Prostate gland (tissue), 2 donors: ENCODE measurements at regions of chr5 and their contacts with region 1.

Region 1: DNA sequence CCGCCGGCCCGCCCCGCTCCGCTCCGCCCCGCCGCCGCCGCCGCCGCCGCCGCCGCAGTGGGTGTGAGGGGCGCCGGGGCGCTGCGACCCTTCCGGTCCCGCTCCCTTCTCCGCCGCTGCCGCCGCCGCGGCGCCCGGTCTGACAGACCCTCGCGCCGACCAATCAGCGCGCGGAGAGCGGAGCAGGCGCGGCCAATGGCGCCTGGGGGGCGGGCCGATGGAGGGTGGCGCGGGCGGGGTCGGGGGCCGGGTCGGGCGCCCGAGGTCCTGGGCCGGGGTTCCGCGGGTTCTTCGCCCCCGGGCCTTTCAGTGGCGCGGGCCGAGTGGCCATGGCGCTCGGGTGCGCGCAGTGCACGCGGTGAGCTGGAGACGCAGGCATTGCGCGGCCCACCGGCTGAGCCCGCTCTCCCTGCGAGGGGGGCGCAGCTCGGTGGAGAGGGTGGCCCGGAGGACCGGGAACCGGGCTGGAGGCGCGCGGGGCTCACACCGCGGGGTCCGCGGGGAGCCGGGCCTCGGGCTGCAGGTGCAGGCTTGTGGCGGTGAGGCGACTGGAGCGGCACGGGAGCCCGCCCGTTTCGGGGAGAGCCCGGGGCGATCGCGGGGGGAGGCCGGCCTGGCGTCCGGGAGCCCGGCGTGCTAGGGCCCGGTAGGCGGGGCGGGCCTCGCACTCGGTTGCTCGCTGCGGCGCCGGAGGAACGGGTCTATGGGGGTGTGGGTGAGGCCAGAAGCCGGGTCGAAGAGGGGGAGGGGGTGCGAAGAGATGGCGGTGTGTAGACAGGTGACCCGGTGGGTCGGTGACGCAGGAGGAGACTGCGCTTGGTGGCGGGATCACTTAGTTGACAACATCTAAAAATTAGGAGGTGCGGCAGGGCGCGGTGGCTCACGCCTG is at the start of gene MAPK9:
- DNase-seq: peak; percentile 74
- H3K4me3 ChIP-seq: peak within 1 kb of the TSS; percentile 89 to 98
- H3K27ac ChIP-seq: peak within 1 kb of the TSS; percentile 91 to 93
- H3K4me1 ChIP-seq: peaks cover 4% of the 10 kb centered on the region
- H3K27me3 ChIP-seq: no peaks in the 10 kb centered on the region
- CTCF ChIP-seq: peak in 1 of 4 experiments; percentile 16
- POLR2A ChIP-seq: peak; percentile 37
- total RNA-seq, gene MAPK9: 28.8 to 38.5 TPM

Region 2: DNA sequence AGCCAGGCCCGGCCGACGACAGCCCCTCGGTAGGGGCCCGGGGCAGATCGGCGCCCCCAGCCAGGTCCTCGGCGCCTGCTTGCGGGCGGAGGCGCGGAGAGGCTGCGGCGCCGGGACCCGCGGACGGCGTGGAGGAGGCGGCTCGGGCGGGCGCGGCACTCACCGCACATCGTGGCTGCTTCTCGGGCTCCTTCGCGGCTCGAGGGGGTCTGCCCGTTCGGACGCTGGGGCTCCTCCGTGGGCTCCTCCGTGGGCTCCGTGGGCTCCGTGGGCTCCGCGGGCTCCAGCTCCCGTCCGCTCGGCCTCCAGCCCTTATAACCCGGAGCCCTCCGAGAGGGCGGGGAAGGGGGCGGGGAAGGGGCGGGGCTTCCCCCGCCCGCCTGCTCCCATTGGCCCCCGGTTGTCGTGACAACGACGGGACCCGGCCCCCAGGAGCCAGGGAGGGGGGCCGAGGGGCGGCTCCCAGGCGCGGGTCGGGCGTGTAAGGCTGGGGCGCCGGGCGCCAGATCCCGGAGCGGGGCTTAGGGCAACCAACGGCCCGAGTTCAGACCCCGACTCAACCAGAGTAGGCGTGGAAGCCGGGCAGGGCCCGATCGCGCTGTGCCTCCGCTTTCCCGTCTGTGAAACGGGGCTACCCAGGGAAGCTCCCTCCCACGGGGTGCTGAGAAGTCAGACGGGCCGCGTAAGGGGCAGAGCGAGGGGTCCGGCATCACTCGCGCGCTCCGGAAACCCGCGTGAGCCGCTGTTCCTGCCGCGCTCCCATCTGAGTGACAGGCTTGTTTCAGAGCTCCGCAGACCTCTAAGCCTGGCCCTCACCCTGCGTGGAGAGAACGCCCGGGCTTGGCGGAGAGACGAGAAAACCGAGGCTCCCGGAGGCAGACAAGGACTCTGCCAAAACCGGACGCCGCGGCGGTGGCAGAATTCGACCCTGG is 61.1 kb after region 1 on chr5 and contains the start of gene GFPT2:
- intact Hi-C with region 1: loop called (anchors 2 kb)
- DNase-seq: peak; percentile 64
- H3K4me3 ChIP-seq: peak within 1 kb of the TSS; percentile 42 to 54
- H3K27ac ChIP-seq: peak within 1 kb of the TSS; percentile 52 to 64
- H3K4me1 ChIP-seq: no peaks in the 10 kb centered on the region
- H3K27me3 ChIP-seq: no peaks in the 10 kb centered on the region
- CTCF ChIP-seq: no peak
- POLR2A ChIP-seq: no peak
- total RNA-seq, gene GFPT2: 3.2 to 14.0 TPM

Region 3: DNA sequence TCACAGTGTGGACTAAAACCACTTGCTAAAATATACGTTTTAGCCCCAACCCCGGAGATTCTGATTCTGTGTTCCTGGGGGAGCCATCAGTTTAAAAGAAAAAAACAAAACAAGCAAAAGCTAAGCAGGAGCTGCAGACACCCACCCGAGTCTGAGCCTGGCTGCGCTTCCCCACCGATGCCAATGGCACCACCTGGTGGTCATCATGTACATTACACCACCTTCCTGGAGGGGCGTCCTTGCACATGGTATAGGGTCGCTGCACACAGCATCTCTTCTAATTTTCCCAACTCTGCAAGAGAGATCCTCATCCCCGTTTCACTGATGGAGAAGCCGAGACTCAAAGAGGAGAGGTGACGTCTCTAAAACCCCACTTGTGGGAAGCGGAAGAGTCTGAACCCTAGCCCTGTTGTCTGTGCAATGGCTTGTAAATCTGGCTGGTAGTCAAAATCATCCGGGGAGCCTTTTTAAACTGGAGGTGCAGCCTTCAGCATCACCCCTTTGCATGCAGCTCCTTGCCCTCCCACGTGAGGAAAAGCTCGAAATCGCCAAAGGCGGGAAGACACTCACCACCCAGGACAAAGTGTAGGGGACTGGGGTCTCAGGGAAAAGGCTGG is 178.9 kb after region 1 on chr5:
- intact Hi-C with region 1: loop called (anchors 2 kb)
- DNase-seq: peak; percentile 33
- H3K4me3 ChIP-seq: no peak overlapping the region
- H3K27ac ChIP-seq: no peak overlapping the region
- H3K4me1 ChIP-seq: no peaks in the 10 kb centered on the region
- H3K27me3 ChIP-seq: no peaks in the 10 kb centered on the region
- CTCF ChIP-seq: peak; percentile 77 to 88 (median 83)
- POLR2A ChIP-seq: no peak